CD4-positive, alpha-beta memory T cell (primary cell): ENCODE measurements at regions of chr16 and their contacts with region 1.

Region 1: DNA sequence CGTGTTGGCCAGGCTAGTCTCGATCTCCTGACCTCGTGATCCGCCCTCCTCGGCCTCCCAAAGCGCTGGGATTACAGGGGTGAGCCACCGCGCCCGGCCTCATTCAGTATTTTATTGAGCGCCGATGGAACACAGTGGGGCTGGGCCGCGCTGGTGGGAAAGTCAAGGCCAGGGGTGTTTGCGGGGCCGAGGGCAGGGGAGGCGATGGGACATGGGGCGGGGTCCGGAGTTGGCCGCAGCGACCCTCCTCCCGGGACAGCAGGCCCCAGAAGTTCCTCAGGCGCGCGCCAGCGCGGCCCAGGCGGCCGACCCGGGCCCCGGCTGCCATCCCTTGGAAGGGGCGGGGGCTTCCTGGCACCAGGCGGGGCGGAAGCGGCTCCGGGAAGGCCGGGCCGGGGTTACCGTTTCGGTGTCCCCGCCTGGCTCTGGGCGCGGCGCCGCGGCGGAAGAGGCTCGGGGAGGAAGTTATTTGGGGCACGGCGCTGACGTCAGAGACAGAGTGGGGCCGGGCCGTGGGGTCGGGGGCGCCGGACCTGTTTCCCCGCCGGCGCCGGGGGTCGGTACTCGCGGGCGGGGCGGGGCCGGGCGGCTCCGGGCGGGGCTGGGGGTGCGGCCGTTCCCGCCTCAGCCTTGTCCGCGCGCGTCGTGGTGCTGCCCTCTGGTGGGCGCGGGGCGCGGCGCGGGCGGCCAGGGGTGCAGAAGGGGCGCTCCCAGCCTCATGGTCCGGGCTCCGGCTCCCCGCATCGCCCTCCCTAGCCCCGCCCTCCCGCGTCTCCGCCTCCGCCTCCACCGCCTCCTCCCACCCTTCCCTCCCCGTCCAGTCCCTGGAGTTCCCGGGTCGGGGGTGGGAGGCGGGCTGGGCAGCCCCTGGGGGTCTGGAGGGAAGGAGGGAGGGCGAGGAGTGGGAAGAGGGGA is 952 bp upstream of the PRSS27 start:
- DNase-seq: peak; percentile 85 to 88 (median 87)
- H3K4me3 ChIP-seq: peak overlapping the region; percentile 17 to 49
- H3K4me3 Mint-ChIP-seq: peak overlapping the region; percentile 70 to 85 (median 74)
- H3K27ac ChIP-seq: peak overlapping the region; percentile 56
- H3K27ac Mint-ChIP-seq: peak overlapping the region; percentile 56 to 90 (median 73)
- H3K4me1 ChIP-seq: peaks cover 5% of the 10 kb centered on the region
- H3K4me1 Mint-ChIP-seq: no peaks in the 10 kb centered on the region
- H3K27me3 ChIP-seq: no peaks in the 10 kb centered on the region
- H3K27me3 Mint-ChIP-seq: peaks cover 4 to 7% of the 10 kb centered on the region in 2 donors

Region 2: DNA sequence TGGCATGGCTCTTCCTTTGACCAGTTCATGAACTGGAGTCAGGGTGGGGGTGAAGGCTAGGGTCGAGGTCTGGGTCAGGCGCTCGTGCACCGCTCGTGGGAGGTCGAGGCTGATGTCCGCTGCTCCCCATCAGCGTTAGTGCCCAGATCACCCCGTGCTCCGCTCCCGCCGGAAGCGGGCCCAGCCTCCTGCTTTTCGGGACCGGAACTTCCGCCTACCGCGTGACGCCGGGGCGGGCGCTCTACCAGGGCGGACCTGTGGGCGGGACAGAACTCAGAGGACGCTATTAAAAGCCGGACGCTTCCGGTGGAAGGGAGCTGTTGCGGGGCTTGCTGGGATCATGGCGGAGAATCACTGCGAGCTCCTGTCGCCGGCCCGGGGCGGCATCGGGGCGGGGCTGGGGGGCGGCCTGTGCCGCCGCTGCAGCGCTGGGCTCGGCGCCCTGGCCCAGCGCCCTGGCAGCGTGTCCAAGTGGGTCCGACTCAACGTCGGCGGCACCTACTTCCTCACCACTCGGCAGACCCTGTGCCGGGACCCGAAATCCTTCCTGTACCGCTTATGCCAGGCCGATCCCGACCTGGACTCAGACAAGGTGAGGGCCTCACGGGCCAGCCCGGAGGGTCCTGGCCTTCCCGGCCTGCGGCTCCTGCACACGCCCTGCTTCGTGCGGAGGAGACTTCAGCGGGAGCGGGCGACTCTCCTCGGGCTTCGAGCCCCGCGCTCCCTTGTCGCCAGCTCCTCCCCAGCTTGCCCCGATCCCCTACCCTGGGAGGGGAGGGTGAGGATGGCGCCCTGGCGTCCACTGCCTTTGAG is 38.6 kb before region 1 on chr16 and contains the start of gene KCTD5:
- CTCF ChIA-PET with region 1: no interaction called
- POLR2A ChIA-PET with region 1: interaction called, 4 read pairs
- intact Hi-C with region 1: loop called (anchors 1 kb)
- DNase-seq: peak; percentile 94 to 95 (median 94)
- H3K4me3 ChIP-seq: peak within 1 kb of the TSS; percentile 96 to 98
- H3K4me3 Mint-ChIP-seq: peak within 1 kb of the TSS; percentile 92 to 97 (median 94)
- H3K27ac ChIP-seq: peak within 1 kb of the TSS; percentile 79
- H3K27ac Mint-ChIP-seq: peak within 1 kb of the TSS; percentile 87 to 96 (median 95)
- H3K4me1 ChIP-seq: peaks cover 34% of the 10 kb centered on the region
- H3K4me1 Mint-ChIP-seq: peaks cover 15 to 30% (median 24%) of the 10 kb centered on the region in 4 donors
- H3K27me3 ChIP-seq: no peaks in the 10 kb centered on the region
- H3K27me3 Mint-ChIP-seq: no peaks in the 10 kb centered on the region
- total RNA-seq, gene KCTD5: 26.7 to 27.1 TPM